PC-9 (cell line): ENCODE measurements at regions of chr6 and their contacts with region 1.

Region 1: GRCh38 chr6:86856937-86857563 is 80.3 kb upstream of the HTR1E start:
- DNase-seq: peak in 1 of 2 experiments; percentile 38
- H3K4me3 ChIP-seq: no peak overlapping the region
- H3K27ac ChIP-seq: no peak overlapping the region
- H3K4me1 ChIP-seq: no peaks in the 10 kb centered on the region
- H3K27me3 ChIP-seq: no peaks in the 10 kb centered on the region
- CTCF ChIP-seq: peak; percentile 82

Region 2: GRCh38 chr6:85756982-85757381 is 1100.1 kb before region 1 on chr6:
- CTCF ChIA-PET with region 1: interaction called, 3 read pairs
- POLR2A ChIA-PET with region 1: no interaction called
- intact Hi-C with region 1: loop called (anchors 5 kb)
- DNase-seq: no peak
- H3K4me3 ChIP-seq: no peak overlapping the region
- H3K27ac ChIP-seq: no peak overlapping the region
- H3K4me1 ChIP-seq: no peaks in the 10 kb centered on the region
- H3K27me3 ChIP-seq: no peaks in the 10 kb centered on the region
- CTCF ChIP-seq: peak; percentile 58